Activated CD8-positive, alpha-beta memory T cell treated with anti-CD3 and anti-CD28 coated beads, Interleukin-2, amount 10 ng/mL, durations not matched to agents 7 days and 5 days (primary cell): ENCODE measurements at regions of chr1 and their contacts with region 1.

Region 1: GRCh38 chr1:44594871-44595746 is 79.2 kb downstream of the TMEM53 start:
- DNase-seq: peak; percentile 84
- ATAC-seq: peak; percentile 97
- H3K4me3 Mint-ChIP-seq: no peak overlapping the region
- H3K27ac Mint-ChIP-seq: no peak overlapping the region
- H3K4me1 Mint-ChIP-seq: no peaks in the 10 kb centered on the region
- H3K27me3 Mint-ChIP-seq: peaks cover 3% of the 10 kb centered on the region

Region 2: DNA sequence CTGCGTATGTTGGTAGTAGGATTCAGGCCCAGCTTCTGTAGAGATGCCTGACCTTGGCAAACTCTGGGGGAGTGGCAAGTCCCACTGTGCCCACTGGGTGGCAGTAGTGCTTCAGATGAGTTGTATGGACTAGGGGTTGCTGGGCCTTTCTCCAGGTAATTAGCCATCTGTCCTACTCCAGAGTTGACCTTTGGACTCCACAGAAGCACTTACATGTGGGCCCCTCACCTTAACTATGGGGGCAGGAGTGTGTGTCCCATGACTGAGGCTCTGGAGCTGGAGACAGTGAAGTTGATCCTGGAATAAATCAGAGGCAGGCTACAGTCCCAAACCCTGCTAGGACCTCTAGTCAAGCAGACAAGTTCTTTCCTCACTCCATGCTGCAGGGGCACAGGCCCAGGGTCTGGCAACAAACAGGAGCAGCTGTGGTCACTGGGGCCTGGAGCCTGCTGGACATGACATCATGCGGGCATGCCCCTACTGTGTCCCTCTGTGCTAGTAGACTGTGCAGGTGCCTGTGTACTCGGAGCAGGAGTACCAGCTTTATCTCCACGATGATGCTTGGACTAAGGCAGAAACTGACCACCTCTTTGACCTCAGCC is 377.2 kb before region 1 on chr1:
- CTCF ChIA-PET with region 1: interaction called, 17 read pairs
- DNase-seq: peak; percentile 83
- ATAC-seq: peak; percentile 35
- H3K4me3 Mint-ChIP-seq: no peak overlapping the region
- H3K27ac Mint-ChIP-seq: no peak overlapping the region
- H3K4me1 Mint-ChIP-seq: peaks cover 30% of the 10 kb centered on the region
- H3K27me3 Mint-ChIP-seq: no peaks in the 10 kb centered on the region

Region 3: DNA sequence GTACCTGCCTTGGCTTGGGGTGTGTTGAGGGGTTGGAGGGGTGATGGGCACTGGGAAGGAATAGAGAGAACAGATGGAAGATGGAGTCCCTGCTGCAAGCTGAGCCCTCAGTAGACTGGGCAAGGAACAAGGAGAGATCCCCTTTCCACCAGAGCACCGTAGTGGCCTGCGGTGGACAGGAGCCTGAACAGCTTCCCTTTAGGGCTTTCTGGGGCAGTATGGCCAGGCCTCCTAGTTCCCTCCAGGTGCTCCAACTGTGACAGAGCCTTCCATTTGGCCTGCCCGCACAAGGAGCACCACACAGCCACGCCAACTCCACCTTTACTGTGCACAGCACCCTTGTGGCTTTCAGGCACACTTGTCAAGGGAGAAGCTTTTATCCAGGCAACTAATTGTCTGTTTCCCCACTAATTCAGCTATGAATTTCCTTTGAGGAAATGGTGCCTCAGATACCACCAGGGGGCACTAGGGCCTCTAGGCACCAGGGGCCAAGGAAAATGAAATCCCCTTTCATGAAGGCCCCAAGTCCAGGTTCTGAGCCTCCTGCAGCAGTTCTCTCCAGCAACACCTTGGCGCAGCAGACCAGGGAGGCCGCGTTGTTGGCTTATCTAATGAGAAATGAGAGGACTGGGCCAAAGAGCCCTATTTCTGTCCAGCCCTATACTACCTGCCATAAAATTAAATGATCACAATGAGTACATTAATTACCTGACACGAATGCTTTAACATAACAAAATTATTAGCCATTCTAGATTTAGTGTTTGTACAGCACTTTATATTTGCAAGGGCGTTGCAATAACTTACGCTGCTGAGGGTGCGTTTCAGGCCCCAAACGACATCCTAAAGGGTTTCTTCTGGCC is 217.0 kb before region 1 on chr1:
- CTCF ChIA-PET with region 1: interaction called, 49 read pairs
- DNase-seq: peak; percentile 55
- ATAC-seq: no peak
- H3K4me3 Mint-ChIP-seq: no peak overlapping the region
- H3K27ac Mint-ChIP-seq: no peak overlapping the region
- H3K4me1 Mint-ChIP-seq: peaks cover 5% of the 10 kb centered on the region
- H3K27me3 Mint-ChIP-seq: peaks cover 8% of the 10 kb centered on the region

Region 4: DNA sequence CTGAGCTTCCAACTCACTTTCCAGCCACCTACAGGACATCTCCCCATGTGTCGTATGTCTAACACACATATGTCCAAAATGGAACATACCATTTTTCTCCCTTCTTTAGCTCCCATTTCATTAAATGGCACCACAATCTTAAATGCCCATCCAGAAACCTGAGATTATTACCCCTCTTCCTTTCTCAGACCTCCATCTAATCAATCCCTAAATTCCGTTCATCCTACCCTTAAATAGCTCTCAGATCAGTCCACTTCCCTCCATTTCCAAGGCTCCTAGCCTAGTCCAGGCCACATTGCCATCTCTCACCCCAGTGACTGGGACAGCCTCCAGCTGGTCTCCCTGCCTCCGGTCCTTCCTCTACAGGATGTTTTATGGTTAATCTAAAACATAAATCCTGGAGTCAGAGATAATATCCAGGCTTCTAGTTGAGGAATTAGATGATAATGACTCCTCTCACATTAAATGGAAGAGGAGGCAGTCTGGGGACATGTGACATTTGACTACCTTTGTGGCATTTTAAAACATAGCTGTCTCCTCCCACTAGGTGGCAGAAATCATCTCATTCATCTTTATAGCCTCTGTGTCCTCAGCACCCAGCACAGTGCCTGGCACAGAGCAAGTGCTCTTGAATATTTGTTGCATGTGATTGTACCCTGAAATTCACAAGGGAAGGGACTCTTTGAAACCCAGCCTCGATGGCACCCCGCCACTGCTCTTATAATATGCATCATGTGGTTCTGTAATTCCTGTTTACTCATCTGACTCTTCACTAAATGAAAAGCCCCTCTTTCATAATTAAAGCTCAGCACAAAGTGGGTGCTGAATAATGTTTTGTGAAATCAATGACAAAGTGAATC is 23.2 kb before region 1 on chr1:
- CTCF ChIA-PET with region 1: interaction called, 12 read pairs
- DNase-seq: peak; percentile 44
- ATAC-seq: peak; percentile 74
- H3K4me3 Mint-ChIP-seq: no peak overlapping the region
- H3K27ac Mint-ChIP-seq: no peak overlapping the region
- H3K4me1 Mint-ChIP-seq: no peaks in the 10 kb centered on the region
- H3K27me3 Mint-ChIP-seq: peaks cover 37% of the 10 kb centered on the region

Region 5: DNA sequence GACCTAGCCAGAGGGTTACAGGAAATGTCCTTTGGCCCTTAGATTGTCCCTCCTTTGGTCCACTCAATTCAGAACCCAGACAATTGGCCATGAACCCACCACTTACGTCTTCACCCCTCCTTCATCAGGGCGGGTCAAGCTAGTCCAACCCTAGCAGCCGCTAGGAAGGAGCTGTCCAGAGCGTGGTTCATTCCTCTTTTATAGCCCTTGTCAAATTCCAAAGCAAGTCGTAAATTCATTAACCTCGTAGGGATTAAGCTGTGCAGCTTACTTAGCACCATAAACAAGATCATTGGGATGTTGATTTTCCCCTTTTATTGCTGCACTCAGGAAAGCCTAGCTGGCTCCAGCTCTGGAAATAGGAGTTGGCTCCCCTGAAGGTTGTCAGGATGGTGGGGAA is 10.9 kb before region 1 on chr1:
- CTCF ChIA-PET with region 1: interaction called, 12 read pairs
- DNase-seq: no peak
- ATAC-seq: no peak
- H3K4me3 Mint-ChIP-seq: no peak overlapping the region
- H3K27ac Mint-ChIP-seq: no peak overlapping the region
- H3K4me1 Mint-ChIP-seq: no peaks in the 10 kb centered on the region
- H3K27me3 Mint-ChIP-seq: peaks cover 13% of the 10 kb centered on the region